CD4-positive, alpha-beta memory T cell (primary cell): ENCODE measurements at regions of chr7 and their contacts with region 1.

Region 1: DNA sequence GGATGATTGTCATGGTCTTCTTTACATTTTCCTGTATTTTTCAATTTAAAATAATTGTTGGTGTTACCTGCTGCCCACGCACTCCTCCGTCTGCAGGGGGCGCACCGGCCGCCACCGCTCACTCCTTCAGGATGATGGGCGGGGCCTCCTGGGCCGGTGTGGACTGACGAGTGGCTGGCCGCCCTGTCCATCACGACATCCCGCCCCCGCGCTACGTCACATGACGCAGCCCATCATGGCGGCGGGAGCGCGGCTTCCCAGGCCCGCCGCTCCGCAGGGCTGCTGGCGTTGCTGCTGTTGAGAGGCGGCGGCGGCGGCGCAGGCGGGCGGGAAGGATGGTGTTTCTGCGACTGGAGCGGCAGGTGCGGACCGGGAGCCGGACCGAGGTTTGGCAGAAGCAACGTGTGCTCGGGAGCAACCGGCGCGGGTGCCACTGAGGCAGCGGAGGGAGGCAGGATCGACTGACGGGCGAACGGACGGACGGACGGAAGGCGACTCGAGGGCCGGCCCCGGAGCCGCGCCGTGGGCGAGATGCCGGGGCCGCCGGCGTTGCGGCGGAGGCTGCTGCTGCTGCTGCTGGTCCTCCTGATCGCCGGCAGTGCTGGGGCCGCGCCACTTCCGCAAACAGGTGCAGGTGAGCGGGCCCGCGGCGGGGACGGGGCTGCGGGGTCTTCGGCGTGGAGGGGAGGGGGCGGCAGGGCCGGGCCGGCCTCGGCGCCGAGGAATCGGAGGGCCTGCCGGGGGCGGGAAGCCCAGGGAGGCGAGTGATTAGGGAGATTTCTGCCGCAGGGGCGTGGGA is at the start of gene LMTK2:
- DNase-seq: peak; percentile 93 to 99 (median 96)
- H3K4me3 ChIP-seq: peak within 1 kb of the TSS; percentile 60 to 84
- H3K4me3 Mint-ChIP-seq: peak within 1 kb of the TSS; percentile 86 to 99 (median 94)
- H3K27ac ChIP-seq: peak within 1 kb of the TSS; percentile 80
- H3K27ac Mint-ChIP-seq: peak within 1 kb of the TSS; percentile 89 to 95 (median 93)
- H3K4me1 ChIP-seq: peaks cover 44% of the 10 kb centered on the region
- H3K4me1 Mint-ChIP-seq: peaks cover 23 to 50% (median 40%) of the 10 kb centered on the region in 4 donors
- H3K27me3 ChIP-seq: no peaks in the 10 kb centered on the region
- H3K27me3 Mint-ChIP-seq: peaks cover 1 to 9% of the 10 kb centered on the region in 2 donors
- total RNA-seq, gene LMTK2: 23.1 to 26.6 TPM

Region 2: GRCh38 chr7:97872025-97872669 is 234.7 kb before region 1 on chr7 and contains the start of gene ASNS:
- CTCF ChIA-PET with region 1: no interaction called
- POLR2A ChIA-PET with region 1: no interaction called
- intact Hi-C with region 1: loop called (anchors 5 kb)
- DNase-seq: peak; percentile 80 to 88 (median 85)
- H3K4me3 ChIP-seq: peak within 1 kb of the TSS; percentile 75 to 78
- H3K4me3 Mint-ChIP-seq: peak within 1 kb of the TSS; percentile 85 to 93 (median 90)
- H3K27ac ChIP-seq: peak within 1 kb of the TSS; percentile 46
- H3K27ac Mint-ChIP-seq: peak within 1 kb of the TSS; percentile 84 to 95 (median 92)
- H3K4me1 ChIP-seq: peaks cover 20% of the 10 kb centered on the region
- H3K4me1 Mint-ChIP-seq: peaks cover 9 to 19% (median 12%) of the 10 kb centered on the region in 4 donors
- H3K27me3 ChIP-seq: no peaks in the 10 kb centered on the region
- H3K27me3 Mint-ChIP-seq: no peaks in the 10 kb centered on the region
- total RNA-seq, gene ASNS: 36.6 to 37.9 TPM

Region 3: GRCh38 chr7:98119256-98119918 is 12.5 kb after region 1 on chr7:
- CTCF ChIA-PET with region 1: interaction called, 21 read pairs
- POLR2A ChIA-PET with region 1: no interaction called
- intact Hi-C with region 1: no loop called
- DNase-seq: no peak
- H3K4me3 ChIP-seq: no peak overlapping the region
- H3K4me3 Mint-ChIP-seq: no peak overlapping the region
- H3K27ac ChIP-seq: no peak overlapping the region
- H3K27ac Mint-ChIP-seq: no peak overlapping the region
- H3K4me1 ChIP-seq: no peaks in the 10 kb centered on the region
- H3K4me1 Mint-ChIP-seq: peaks cover 23 to 43% (median 28%) of the 10 kb centered on the region in 4 donors
- H3K27me3 ChIP-seq: no peaks in the 10 kb centered on the region
- H3K27me3 Mint-ChIP-seq: peaks cover 0 to 1% of the 10 kb centered on the region in 2 donors

Region 4: GRCh38 chr7:98168181-98168905 is 61.5 kb after region 1 on chr7:
- CTCF ChIA-PET with region 1: interaction called, 102 read pairs
- POLR2A ChIA-PET with region 1: no interaction called
- intact Hi-C with region 1: loop called (anchors 1 kb)
- DNase-seq: peak; percentile 48 to 72 (median 54)
- H3K4me3 ChIP-seq: no peak overlapping the region
- H3K4me3 Mint-ChIP-seq: no peak overlapping the region
- H3K27ac ChIP-seq: no peak overlapping the region
- H3K27ac Mint-ChIP-seq: peak overlapping the region in 1 of 7 donors; percentile 57
- H3K4me1 ChIP-seq: no peaks in the 10 kb centered on the region
- H3K4me1 Mint-ChIP-seq: peaks cover 4 to 11% (median 9%) of the 10 kb centered on the region in 4 donors
- H3K27me3 ChIP-seq: no peaks in the 10 kb centered on the region
- H3K27me3 Mint-ChIP-seq: no peaks in the 10 kb centered on the region

Region 5: DNA sequence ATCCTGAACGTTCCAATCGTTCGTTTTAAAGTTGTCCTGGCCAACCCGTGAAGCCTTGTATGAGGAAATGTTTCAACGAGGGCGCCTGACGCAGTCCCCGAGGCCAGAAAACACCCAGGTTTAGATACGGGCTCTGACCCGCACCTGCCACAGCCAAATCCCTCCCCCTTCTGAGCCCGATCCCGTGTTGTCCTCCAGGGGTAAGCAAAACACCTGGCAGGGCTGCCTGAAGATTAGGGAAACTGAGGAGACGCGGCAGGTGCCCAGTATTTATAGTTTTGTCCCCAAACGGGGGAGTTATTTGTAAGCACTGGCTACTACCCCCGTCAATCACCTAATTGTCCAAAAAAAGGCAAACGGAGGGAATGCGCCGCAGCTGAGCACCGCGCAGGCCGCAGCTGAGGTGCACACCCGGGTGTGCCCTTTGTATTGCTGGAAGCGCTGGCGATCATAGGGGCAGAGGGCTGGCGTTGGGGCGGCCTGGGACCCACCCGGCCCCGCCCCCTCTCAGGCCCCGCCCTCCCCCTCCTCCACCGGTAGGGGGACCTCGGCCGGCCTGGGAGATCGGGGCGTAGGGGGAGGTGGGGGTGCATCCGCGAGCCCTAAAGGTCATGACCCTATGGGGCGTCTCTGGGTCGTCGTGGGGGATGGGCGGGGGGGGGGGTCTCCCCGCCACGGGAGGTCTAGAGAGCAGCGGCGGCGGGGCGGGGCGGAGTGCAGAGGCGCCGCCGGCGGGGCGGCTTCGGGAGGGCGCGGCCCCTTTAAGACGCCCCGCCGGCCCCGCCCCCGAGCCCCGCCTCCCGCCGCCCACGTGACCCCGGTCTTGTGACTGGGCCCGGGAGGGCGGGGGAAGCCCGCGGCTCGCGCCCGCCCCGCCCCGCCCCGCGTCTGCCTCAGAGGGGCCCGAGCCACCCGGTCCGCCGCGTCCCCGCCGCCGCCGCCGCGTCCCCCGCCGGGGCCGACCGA is 174.2 kb after region 1 on chr7 and contains the start of gene BRI3:
- CTCF ChIA-PET with region 1: no interaction called
- POLR2A ChIA-PET with region 1: interaction called, 3 read pairs
- intact Hi-C with region 1: loop called (anchors 1 kb)
- DNase-seq: peak; percentile 82 to 91 (median 84)
- H3K4me3 ChIP-seq: peak within 1 kb of the TSS; percentile 73 to 81
- H3K4me3 Mint-ChIP-seq: peak within 1 kb of the TSS; percentile 86 to 93 (median 88)
- H3K27ac ChIP-seq: peak within 1 kb of the TSS; percentile 74
- H3K27ac Mint-ChIP-seq: peak within 1 kb of the TSS; percentile 77 to 92 (median 90)
- H3K4me1 ChIP-seq: peaks cover 43% of the 10 kb centered on the region
- H3K4me1 Mint-ChIP-seq: peaks cover 10 to 36% (median 27%) of the 10 kb centered on the region in 4 donors
- H3K27me3 ChIP-seq: no peaks in the 10 kb centered on the region
- H3K27me3 Mint-ChIP-seq: no peaks in the 10 kb centered on the region
- total RNA-seq, gene BRI3: 73.8 to 80.4 TPM